ENCODE measurements at regions of chr2 and their contacts with region 1.

Region 1: GRCh38 chr2:210169516-210170199 is 1.6 kb downstream of the KANSL1L start:
- DNase-seq: no peak
- H3K4me3 ChIP-seq: peak overlapping the region; percentile 79
- H3K27ac ChIP-seq: peak overlapping the region; percentile 98
- H3K4me1 ChIP-seq: peaks cover 70% of the 10 kb centered on the region
- H3K27me3 ChIP-seq: no peaks in the 10 kb centered on the region
- CTCF ChIP-seq: no peak

Region 2: DNA sequence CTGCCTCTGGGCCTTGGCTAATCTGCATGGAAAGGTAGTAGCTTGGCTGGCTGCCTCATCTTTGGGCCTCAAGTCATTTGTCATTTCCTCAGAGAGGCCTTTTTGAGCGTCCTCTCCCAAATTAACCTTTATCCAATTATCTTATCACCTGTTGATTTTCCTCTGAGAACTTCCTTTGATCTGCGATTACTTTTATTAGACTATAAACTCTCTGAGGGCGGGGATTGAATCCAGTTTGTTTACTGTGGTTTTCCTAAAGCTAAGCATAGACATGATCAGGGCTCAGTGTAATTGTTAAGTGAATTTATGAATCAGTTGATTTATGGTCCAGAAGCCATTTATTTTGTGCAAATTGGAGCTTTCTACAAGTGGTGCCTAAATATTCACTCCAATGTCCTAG is 159.8 kb before region 1 on chr2:
- intact Hi-C with region 1: loop called (anchors 10 kb)
- DNase-seq: no peak
- H3K4me3 ChIP-seq: no peak overlapping the region
- H3K27ac ChIP-seq: no peak overlapping the region
- H3K4me1 ChIP-seq: peaks cover 46% of the 10 kb centered on the region
- H3K27me3 ChIP-seq: no peaks in the 10 kb centered on the region
- CTCF ChIP-seq: no peak

Region 3: DNA sequence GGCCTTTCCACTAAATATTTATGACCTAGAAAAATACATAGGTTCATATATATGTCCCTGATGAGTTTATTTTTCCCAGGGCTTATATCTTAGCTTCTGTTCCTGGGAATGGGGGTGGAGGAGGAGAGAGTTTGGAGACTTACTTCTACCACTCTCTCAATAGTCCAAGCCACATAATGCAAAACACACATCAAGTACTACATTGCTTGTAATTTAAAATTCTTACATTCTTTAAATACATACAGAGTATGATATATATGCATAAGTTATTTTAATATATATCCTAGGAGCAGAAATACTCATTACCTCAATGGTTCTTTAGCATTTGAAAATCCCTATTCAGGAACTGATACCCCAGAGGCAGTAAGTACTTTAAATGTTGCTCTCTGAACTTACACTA is 218.5 kb after region 1 on chr2:
- intact Hi-C with region 1: no loop called
- DNase-seq: no peak
- H3K4me3 ChIP-seq: no peak overlapping the region
- H3K27ac ChIP-seq: no peak overlapping the region
- H3K4me1 ChIP-seq: peaks cover 8% of the 10 kb centered on the region
- H3K27me3 ChIP-seq: no peaks in the 10 kb centered on the region
- CTCF ChIP-seq: no peak

Region 4: GRCh38 chr2:210399440-210400041 is 229.9 kb after region 1 on chr2:
- intact Hi-C with region 1: no loop called
- DNase-seq: no peak
- H3K4me3 ChIP-seq: no peak overlapping the region
- H3K27ac ChIP-seq: no peak overlapping the region
- H3K4me1 ChIP-seq: no peaks in the 10 kb centered on the region
- H3K27me3 ChIP-seq: no peaks in the 10 kb centered on the region
- CTCF ChIP-seq: peak; percentile 59

Measured in left ventricle myocardium inferior (tissue), 1 donor.